ENCODE measurements at regions of chr12 and their contacts with region 1.

Region 1: GRCh38 chr12:32089586-32089985 is 17.1 kb upstream of the BICD1 start:
- DNase-seq: no peak
- H3K4me3 ChIP-seq: no peak overlapping the region
- H3K27ac ChIP-seq: no peak overlapping the region
- H3K4me1 ChIP-seq: no peaks in the 10 kb centered on the region
- H3K27me3 ChIP-seq: no peaks in the 10 kb centered on the region
- CTCF ChIP-seq: no peak
- EP300 ChIP-seq: no peak
- POLR2A ChIP-seq: no peak

Region 2: GRCh38 chr12:32016680-32017482 is 72.7 kb before region 1 on chr12:
- intact Hi-C with region 1: no loop called
- DNase-seq: no peak
- H3K4me3 ChIP-seq: no peak overlapping the region
- H3K27ac ChIP-seq: no peak overlapping the region
- H3K4me1 ChIP-seq: peaks cover 3% of the 10 kb centered on the region
- H3K27me3 ChIP-seq: no peaks in the 10 kb centered on the region
- CTCF ChIP-seq: no peak
- EP300 ChIP-seq: no peak
- POLR2A ChIP-seq: no peak

Region 3: GRCh38 chr12:32134189-32134888 is 44.8 kb after region 1 on chr12:
- intact Hi-C with region 1: loop called in 1 of 4 experiments (anchors 2 kb)
- DNase-seq: no peak
- H3K4me3 ChIP-seq: no peak overlapping the region
- H3K27ac ChIP-seq: peak overlapping the region in 1 of 2 donors; percentile 46
- H3K4me1 ChIP-seq: peaks cover 12% of the 10 kb centered on the region
- H3K27me3 ChIP-seq: no peaks in the 10 kb centered on the region
- CTCF ChIP-seq: peak in 1 of 3 donors; percentile 7
- EP300 ChIP-seq: no peak
- POLR2A ChIP-seq: no peak